ENCODE measurements at regions of chr12 and their contacts with region 1.

Region 1: DNA sequence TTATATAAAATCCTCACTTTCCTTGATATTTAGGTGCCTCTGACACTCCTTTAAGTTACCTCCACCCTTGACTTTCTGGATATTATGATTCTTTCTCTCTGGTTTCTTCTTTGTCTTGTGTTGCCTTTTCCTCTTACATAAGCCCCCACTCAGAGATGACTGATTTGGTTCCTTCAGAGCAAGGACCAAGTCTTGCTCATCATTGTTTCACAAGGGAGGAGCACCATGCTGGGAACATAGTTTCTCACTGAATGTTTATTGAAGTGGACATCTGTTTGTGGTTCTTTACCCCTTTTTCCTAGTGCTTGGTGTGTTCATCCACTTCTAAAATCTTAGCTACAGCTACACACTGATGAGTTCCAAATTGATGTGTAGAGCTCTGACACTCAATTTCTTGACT is 161.3 kb upstream of the PTPRQ start:
- DNase-seq: no peak
- H3K4me3 ChIP-seq: no peak overlapping the region
- H3K27ac ChIP-seq: no peak overlapping the region
- H3K4me1 ChIP-seq: no peaks in the 10 kb centered on the region
- H3K27me3 ChIP-seq: no peaks in the 10 kb centered on the region; the same call in 1 of the 2 replicates
- CTCF ChIP-seq: no peak
- EP300 ChIP-seq: no peak
- RAD21 ChIP-seq: no peak

Region 2: GRCh38 chr12:80269803-80270552 is 12.8 kb before region 1 on chr12:
- CTCF ChIA-PET with region 1: interaction called, 20 read pairs
- POLR2A ChIA-PET with region 1: no interaction called
- DNase-seq: peak; percentile 10
- H3K4me3 ChIP-seq: no peak overlapping the region
- H3K27ac ChIP-seq: peak overlapping the region in 1 of 2 experiments; percentile 60; a peak in 2 of 4 replicates
- H3K4me1 ChIP-seq: peaks cover 0 to 10% of the 10 kb centered on the region in 2 experiments; a peak in 2 of 4 replicates
- H3K27me3 ChIP-seq: no peaks in the 10 kb centered on the region; the same call in 1 of the 2 replicates
- CTCF ChIP-seq: peak; percentile 81
- EP300 ChIP-seq: no peak
- RAD21 ChIP-seq: peak; percentile 67

Region 3: GRCh38 chr12:80293759-80294158 is 11.0 kb after region 1 on chr12:
- CTCF ChIA-PET with region 1: no interaction called
- POLR2A ChIA-PET with region 1: no interaction called
- DNase-seq: no peak
- H3K4me3 ChIP-seq: no peak overlapping the region
- H3K27ac ChIP-seq: no peak overlapping the region
- H3K4me1 ChIP-seq: no peaks in the 10 kb centered on the region
- H3K27me3 ChIP-seq: peaks cover 38% of the 10 kb centered on the region
- CTCF ChIP-seq: no peak
- EP300 ChIP-seq: no peak
- RAD21 ChIP-seq: no peak

Region 4: DNA sequence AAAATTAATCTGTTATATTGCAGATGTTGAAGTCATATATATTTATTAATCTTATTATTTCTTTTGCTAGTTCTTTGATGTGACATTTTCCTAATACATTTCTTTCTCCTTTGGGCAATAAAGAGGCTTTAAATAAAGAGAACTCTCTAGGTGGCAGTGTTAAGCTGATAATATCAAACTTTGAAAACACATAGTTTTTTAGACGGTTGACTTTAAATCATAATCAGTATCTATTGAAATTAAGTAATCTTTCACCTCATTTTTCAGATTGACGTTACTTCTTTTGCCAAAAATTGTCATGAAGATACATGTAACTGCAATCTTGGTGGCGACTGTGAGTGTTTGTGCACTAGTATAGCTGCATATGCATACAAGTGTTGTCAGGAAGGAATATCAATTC is 30.4 kb after region 1 on chr12:
- CTCF ChIA-PET with region 1: no interaction called
- POLR2A ChIA-PET with region 1: no interaction called
- DNase-seq: no peak
- H3K4me3 ChIP-seq: no peak overlapping the region
- H3K27ac ChIP-seq: no peak overlapping the region
- H3K4me1 ChIP-seq: no peaks in the 10 kb centered on the region
- H3K27me3 ChIP-seq: peaks cover 4% of the 10 kb centered on the region; the same call in 1 of the 2 replicates
- CTCF ChIP-seq: peak; percentile 25; the same call in 1 of the 2 replicates
- EP300 ChIP-seq: no peak
- RAD21 ChIP-seq: no peak

Region 5: GRCh38 chr12:80432055-80432454 is 149.3 kb after region 1 on chr12:
- CTCF ChIA-PET with region 1: no interaction called
- POLR2A ChIA-PET with region 1: no interaction called
- DNase-seq: no peak
- H3K4me3 ChIP-seq: no peak overlapping the region
- H3K27ac ChIP-seq: no peak overlapping the region
- H3K4me1 ChIP-seq: no peaks in the 10 kb centered on the region
- H3K27me3 ChIP-seq: no peaks in the 10 kb centered on the region
- CTCF ChIP-seq: no peak
- EP300 ChIP-seq: no peak
- RAD21 ChIP-seq: no peak

Region 6: GRCh38 chr12:81070846-81071245 is 788.1 kb after region 1 on chr12:
- CTCF ChIA-PET with region 1: no interaction called
- POLR2A ChIA-PET with region 1: no interaction called
- DNase-seq: no peak
- H3K4me3 ChIP-seq: no peak overlapping the region
- H3K27ac ChIP-seq: no peak overlapping the region
- H3K4me1 ChIP-seq: no peaks in the 10 kb centered on the region
- H3K27me3 ChIP-seq: peaks cover 13% of the 10 kb centered on the region; the same call in 1 of the 2 replicates
- CTCF ChIP-seq: no peak
- EP300 ChIP-seq: no peak
- RAD21 ChIP-seq: no peak

Measured in SK-N-SH (cell line).